Mammary epithelial cell (primary cell): ENCODE measurements at regions of chr17 and their contacts with region 1.

Region 1: DNA sequence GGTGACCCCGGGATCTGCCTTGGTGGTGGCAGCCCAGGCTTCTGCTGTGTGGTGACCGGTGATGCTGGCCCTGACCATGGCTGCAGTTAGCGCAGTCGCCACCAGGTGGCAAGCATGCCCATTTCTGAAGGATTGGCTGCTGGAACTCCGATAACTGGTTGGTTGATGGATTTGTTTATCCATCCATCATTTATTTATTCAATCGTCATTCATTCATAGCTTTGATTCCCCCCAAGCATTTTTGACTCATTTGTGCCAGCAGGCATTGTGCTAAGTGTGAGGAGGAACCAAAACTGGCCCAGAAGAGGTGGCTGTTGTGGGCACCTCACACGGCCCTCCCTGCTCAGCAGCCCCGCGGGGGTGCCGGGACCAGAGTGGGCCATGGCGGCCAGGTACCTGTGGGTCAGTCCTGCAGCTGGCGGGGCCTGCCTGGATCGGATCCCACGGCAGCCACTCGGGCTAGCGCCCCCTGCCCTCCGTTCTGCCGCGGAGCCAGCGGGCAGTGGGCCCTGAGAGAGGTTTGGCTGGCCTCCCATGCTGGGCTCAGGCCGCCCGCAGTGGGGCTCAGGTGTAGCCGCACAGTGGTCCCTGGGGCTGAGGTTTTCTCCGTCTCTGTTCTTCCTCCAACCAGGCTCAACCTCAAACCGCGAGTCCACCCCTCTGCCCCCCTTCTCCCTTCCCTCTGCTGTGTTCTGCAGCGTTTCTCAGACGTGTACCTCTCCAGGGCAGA is 28.8 kb upstream of the ITGA3 start:
- DNase-seq: peak; percentile 84
- H3K4me3 ChIP-seq: peak overlapping the region; percentile 28 to 50 (median 50)
- H3K27ac ChIP-seq: peak overlapping the region; percentile 94
- H3K4me1 ChIP-seq: peaks cover 29% of the 10 kb centered on the region
- H3K27me3 ChIP-seq: no peaks in the 10 kb centered on the region
- CTCF ChIP-seq: peak; percentile 95 to 97

Region 2: GRCh38 chr17:49968380-49969133 is 58.5 kb before region 1 on chr17:
- CTCF ChIA-PET with region 1: no interaction called
- dilution Hi-C with region 1: no loop called
- in situ Hi-C with region 1: no loop called
- intact Hi-C with region 1: no loop called
- DNase-seq: peak; percentile 61
- H3K4me3 ChIP-seq: peak overlapping the region; percentile 13 to 49 (median 43)
- H3K27ac ChIP-seq: no peak overlapping the region
- H3K4me1 ChIP-seq: peaks cover 35% of the 10 kb centered on the region
- H3K27me3 ChIP-seq: peaks cover 71% of the 10 kb centered on the region
- CTCF ChIP-seq: no peak

Region 3: GRCh38 chr17:50037321-50038071 is 10.4 kb after region 1 on chr17:
- CTCF ChIA-PET with region 1: no interaction called
- dilution Hi-C with region 1: no loop called
- in situ Hi-C with region 1: no loop called
- intact Hi-C with region 1: loop called (anchors 1 kb)
- DNase-seq: peak; percentile 69
- H3K4me3 ChIP-seq: no peak overlapping the region
- H3K27ac ChIP-seq: peak overlapping the region; percentile 45
- H3K4me1 ChIP-seq: peaks cover 24% of the 10 kb centered on the region
- H3K27me3 ChIP-seq: no peaks in the 10 kb centered on the region
- CTCF ChIP-seq: peak in 1 of 2 donors; percentile 6

Region 4: GRCh38 chr17:50055426-50056230 is 28.6 kb after region 1 on chr17 and contains the start of gene ITGA3:
- CTCF ChIA-PET with region 1: interaction called, 5 read pairs
- dilution Hi-C with region 1: no loop called
- in situ Hi-C with region 1: loop called (anchors 5 kb)
- intact Hi-C with region 1: loop called (anchors 1 kb)
- DNase-seq: peak; percentile 98
- H3K4me3 ChIP-seq: peak within 1 kb of the TSS; percentile 57 to 87 (median 86)
- H3K27ac ChIP-seq: peak within 1 kb of the TSS; percentile 93
- H3K4me1 ChIP-seq: peaks cover 66% of the 10 kb centered on the region
- H3K27me3 ChIP-seq: no peaks in the 10 kb centered on the region
- CTCF ChIP-seq: peak in 1 of 2 donors; percentile 21
- total RNA-seq, gene ITGA3: 1,418 to 2,030 TPM

Region 5: DNA sequence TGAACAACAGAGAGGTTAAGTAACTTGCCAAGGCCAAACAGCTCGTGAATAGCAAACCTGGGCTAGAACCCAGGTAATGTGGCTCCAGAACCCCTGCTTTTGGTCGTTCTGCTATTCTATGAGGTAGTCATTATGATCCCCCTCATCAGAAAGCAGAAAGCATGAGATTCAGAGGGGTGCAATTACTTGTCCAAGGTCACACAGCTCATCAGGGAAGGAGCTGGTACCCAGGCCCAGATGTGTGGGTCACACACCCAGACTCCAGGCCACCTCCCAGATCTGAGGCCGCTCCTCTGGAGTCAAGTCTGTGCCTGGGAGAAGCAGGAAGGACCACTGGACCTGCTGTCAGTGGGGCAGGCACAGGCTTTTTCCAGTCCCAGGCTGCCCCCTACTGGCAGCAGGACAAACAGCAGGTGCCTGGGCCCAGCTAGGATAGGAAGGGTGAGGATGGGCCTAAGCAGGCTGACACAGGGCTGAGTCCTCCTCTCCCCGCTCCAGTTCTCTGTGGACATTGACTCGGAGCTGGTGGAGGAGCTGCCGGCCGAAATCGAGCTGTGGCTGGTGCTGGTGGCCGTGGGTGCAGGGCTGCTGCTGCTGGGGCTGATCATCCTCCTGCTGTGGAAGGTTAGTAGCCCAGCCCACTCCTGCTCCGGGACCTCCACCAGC is 60.3 kb after region 1 on chr17:
- CTCF ChIA-PET with region 1: no interaction called
- dilution Hi-C with region 1: no loop called
- in situ Hi-C with region 1: loop called in 1 of 2 experiments (anchors 10 kb)
- intact Hi-C with region 1: loop called (anchors 1 kb)
- DNase-seq: peak; percentile 46
- H3K4me3 ChIP-seq: no peak overlapping the region
- H3K27ac ChIP-seq: no peak overlapping the region
- H3K4me1 ChIP-seq: peaks cover 3% of the 10 kb centered on the region
- H3K27me3 ChIP-seq: no peaks in the 10 kb centered on the region
- CTCF ChIP-seq: peak; percentile 87 to 89

Region 6: GRCh38 chr17:50151041-50151936 is 124.2 kb after region 1 on chr17:
- CTCF ChIA-PET with region 1: no interaction called
- dilution Hi-C with region 1: no loop called
- in situ Hi-C with region 1: no loop called
- intact Hi-C with region 1: loop called (anchors 5 kb)
- DNase-seq: peak; percentile 84
- H3K4me3 ChIP-seq: peak overlapping the region; percentile 18 to 75 (median 75)
- H3K27ac ChIP-seq: peak overlapping the region; percentile 19
- H3K4me1 ChIP-seq: peaks cover 67% of the 10 kb centered on the region
- H3K27me3 ChIP-seq: no peaks in the 10 kb centered on the region
- CTCF ChIP-seq: peak; percentile 35 to 71